ENCODE measurements at regions of chr1 and their contacts with region 1.

Region 1: DNA sequence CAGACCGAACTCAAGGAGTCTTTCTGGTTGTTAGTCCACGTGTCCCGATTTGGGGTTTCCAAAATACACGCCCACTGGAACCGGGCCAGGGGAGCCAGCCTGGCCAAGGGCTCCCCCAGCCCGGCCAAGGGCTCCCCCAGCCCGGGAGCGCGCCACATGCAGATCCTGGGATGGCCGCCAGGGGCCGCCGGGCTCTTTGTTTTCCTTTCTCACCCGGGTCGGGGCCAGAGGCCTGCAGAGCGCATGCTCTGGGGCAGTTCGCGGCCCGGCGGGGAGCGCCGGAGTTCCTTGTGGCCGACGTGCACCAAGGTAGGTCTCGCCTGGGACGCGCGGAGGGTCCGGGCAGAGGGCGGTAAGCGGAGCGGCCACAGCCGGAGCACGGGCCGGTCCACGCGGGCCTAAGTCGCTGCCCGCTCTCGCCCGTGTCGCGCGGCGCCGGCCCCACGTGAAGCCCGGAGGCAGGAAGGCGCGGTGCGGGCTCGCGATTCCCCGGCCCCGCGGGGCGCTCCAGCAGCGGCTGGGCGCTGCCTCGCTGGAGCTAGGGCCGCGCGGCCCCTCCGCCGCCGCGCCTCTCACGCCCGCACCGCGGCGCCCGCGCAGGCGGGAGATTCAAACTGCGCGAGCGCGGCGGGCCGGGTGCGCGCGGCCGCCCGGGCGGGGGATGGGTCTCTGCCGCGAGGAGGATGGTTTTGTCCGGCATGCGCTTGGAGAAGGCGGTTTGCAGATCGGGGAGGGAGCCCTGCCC is 12.3 kb downstream of the RCC1 start:
- DNase-seq: peak; percentile 96
- H3K4me3 ChIP-seq: peak overlapping the region; percentile 59 to 70
- H3K27ac ChIP-seq: peak overlapping the region; percentile 73 to 76
- H3K4me1 ChIP-seq: peaks cover 4 to 12% of the 10 kb centered on the region in 2 experiments; a peak in 2 of 4 replicates
- H3K27me3 ChIP-seq: no peaks in the 10 kb centered on the region
- CTCF ChIP-seq: peak; percentile 95
- EP300 ChIP-seq: no peak
- RAD21 ChIP-seq: peak; percentile 78

Region 2: DNA sequence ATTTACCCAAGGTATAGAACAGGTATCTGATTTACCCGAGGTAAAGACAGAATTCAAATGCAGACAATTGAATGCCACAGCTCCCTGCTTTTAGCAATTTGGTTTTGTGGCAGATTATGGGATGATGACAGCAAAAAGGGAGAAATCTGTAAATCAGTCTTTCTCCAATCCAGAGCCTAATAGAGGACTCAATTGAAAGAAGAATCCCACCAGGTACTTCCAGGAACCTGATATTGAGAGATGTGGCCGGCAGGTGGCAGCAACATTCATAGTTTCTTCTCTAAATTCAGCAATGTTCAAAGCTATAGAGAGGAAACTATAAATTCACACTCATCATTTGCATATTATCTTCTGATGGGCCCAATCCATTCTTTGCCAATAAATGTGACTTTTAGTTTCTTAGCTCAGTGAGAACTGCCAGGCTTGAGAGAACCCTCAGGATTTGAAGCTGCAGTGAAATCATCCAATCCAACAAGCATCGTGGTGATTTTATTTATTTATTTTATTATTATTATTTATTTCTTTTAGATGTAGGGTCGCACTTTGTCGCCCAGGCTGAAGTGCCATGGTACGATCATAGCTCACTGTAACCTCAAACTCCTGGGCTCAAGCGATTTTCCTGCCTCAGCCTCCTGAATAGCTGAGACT is 158.5 kb before region 1 on chr1:
- CTCF ChIA-PET with region 1: interaction called, 16 read pairs
- POLR2A ChIA-PET with region 1: interaction called, 4 read pairs
- DNase-seq: peak; percentile 75
- H3K4me3 ChIP-seq: peak overlapping the region in 1 of 2 experiments; percentile 39; a peak in 1 of 4 replicates
- H3K27ac ChIP-seq: no peak overlapping the region
- H3K4me1 ChIP-seq: no peaks in the 10 kb centered on the region
- H3K27me3 ChIP-seq: no peaks in the 10 kb centered on the region
- CTCF ChIP-seq: peak; percentile 80
- EP300 ChIP-seq: no peak
- RAD21 ChIP-seq: peak; percentile 78

Region 3: DNA sequence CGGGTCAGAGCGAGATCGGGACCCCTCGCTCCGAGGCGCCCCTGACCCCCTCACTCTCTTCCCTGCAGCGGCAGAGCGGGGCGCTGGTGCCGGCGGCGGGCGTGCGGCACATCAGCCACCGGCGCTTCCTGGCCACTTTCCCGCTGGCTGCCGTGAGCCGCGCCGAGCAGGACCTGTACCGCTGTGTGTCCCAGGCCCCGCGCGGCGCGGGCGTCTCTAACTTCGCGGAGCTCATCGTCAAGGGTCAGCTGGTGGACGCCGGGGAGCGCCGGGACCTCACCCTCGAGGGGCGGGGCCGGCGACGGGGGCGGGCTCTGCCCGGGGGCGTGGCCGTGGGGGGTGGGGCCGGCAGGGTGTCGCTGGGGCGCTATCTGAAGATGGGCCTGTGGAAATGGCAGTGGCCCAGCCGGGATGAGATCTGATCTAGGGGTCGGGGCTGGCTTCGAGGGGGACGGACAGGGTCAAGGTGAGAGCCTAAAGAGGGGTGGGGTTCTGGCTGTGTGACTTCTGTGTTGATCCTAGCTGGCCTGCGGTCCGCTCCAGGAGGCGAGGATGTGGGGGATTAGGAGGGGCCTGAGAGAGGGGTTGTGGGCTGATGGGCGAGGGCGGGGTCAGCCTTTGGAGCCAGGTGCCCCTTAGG is 741.8 kb after region 1 on chr1:
- CTCF ChIA-PET with region 1: no interaction called
- POLR2A ChIA-PET with region 1: no interaction called
- DNase-seq: peak; percentile 91
- H3K4me3 ChIP-seq: peak overlapping the region in 1 of 2 experiments; percentile 23; a peak in 2 of 4 replicates
- H3K27ac ChIP-seq: no peak overlapping the region
- H3K4me1 ChIP-seq: peaks cover 18 to 26% of the 10 kb centered on the region in 2 experiments; a peak in 2 of 4 replicates
- H3K27me3 ChIP-seq: no peaks in the 10 kb centered on the region
- CTCF ChIP-seq: no peak
- EP300 ChIP-seq: no peak
- RAD21 ChIP-seq: no peak

Measured in SK-N-SH (cell line).